AG04449 (cell line): ENCODE measurements at regions of chr16 and their contacts with region 1.

Region 1: GRCh38 chr16:48164907-48165726 is 9.3 kb upstream of the ABCC12 start:
- DNase-seq: no peak
- H3K4me3 ChIP-seq: no peak overlapping the region
- CTCF ChIP-seq: peak; percentile 92

Region 2: GRCh38 chr16:46947900-46948547 is 1217.1 kb before region 1 on chr16:
- CTCF ChIA-PET with region 1: interaction called, 49 read pairs
- POLR2A ChIA-PET with region 1: no interaction called
- DNase-seq: no peak
- H3K4me3 ChIP-seq: no peak overlapping the region
- CTCF ChIP-seq: peak; percentile 47

Region 3: GRCh38 chr16:47136101-47136820 is 1028.9 kb before region 1 on chr16:
- CTCF ChIA-PET with region 1: interaction called, 322 read pairs
- POLR2A ChIA-PET with region 1: no interaction called
- DNase-seq: no peak
- H3K4me3 ChIP-seq: no peak overlapping the region
- CTCF ChIP-seq: no peak

Region 4: GRCh38 chr16:48121276-48121675 is 43.8 kb before region 1 on chr16:
- CTCF ChIA-PET with region 1: no interaction called
- POLR2A ChIA-PET with region 1: no interaction called
- DNase-seq: no peak
- H3K4me3 ChIP-seq: no peak overlapping the region
- CTCF ChIP-seq: no peak